GM10248 (cell line): ENCODE measurements at regions of chr2 and their contacts with region 1.

Region 1: DNA sequence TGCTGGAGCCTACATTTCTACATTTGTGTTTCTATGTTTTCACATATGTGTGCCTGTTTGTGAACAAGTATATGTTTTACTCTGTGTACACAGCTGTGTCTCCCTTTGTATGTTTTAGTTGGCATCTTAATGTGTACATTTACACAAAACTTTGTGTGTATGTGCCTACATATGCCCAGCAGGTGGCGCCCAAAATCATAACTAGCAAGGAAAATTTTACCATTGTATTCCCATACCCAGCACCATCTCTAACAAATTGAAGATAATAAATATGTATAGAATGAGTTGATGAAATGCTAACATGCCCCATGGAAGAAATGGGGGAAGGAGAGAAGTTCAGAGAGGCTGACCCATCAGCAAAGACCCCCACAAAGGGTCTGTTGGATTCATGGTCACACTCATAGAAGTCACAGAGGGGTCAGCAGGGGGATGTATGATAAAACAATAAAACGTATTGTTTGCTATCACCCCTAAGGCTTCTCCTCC is 48.1 kb downstream of the PKDCC start:
- DNase-seq: peak; percentile 37
- CTCF ChIP-seq: peak; percentile 78

Region 2: DNA sequence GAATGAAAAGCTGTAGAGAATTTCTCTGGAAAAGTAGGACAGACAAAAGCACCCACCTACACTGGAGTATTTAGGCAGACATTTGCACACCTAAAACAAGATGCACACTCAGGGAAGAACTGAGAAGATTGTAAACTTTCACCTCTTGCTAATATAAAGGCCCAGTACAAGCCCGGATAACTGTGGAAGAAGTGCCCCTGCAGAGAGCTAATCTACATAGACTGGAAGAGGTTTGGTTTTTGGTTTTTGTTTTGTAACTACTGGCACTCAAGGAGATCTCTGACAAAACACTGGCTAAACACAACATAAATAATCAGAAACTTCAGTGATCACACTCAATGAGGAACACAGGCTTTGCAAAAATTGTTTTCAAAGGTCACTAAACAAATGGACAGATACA is 861.9 kb before region 1 on chr2:
- CTCF ChIA-PET with region 1: no interaction called
- POLR2A ChIA-PET with region 1: no interaction called
- DNase-seq: no peak
- CTCF ChIP-seq: no peak

Region 3: GRCh38 chr2:41853427-41854216 is 242.3 kb before region 1 on chr2:
- CTCF ChIA-PET with region 1: interaction called, 420 read pairs
- POLR2A ChIA-PET with region 1: no interaction called
- DNase-seq: no peak
- CTCF ChIP-seq: peak; percentile 59

Region 4: DNA sequence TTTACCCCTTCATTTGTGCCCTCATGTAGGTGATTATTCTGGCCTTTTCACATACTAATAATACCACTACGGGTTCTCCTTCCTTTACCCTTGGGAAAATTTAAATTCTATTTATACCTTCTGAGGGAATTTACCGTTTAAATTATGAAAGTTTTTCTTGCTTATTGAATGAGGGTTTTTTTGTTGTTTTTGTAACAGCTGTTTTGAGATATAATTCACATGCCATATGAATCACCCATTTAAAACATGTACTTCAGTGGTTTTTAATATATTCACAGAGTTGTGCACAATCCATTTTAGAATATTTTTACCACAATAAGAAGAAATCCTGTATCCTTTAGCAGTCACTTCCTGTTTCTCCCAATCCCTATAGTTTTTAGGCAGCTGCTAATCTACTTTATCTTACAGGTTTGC is 127.9 kb after region 1 on chr2:
- CTCF ChIA-PET with region 1: interaction called, 11 read pairs
- POLR2A ChIA-PET with region 1: no interaction called
- DNase-seq: no peak
- CTCF ChIP-seq: no peak

Region 5: DNA sequence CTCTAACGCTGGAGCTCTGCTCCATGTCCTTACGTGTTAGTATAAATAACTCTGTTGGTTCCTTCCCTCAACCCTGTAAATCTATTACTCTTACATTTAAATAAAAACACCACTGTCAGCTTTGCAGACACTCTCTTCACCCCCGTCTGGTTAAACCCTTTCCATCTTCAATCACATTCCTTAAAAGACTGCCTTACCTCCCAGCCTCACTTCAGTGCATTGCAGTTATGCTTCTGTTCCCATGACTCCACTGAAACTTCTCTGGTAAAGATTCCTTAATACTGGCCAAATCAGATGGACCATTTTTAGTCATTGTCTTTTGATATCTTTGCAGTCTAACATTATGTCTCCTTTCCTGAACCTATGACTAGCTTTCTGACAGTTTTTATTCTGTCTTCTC is 134.9 kb after region 1 on chr2:
- CTCF ChIA-PET with region 1: interaction called, 106 read pairs
- POLR2A ChIA-PET with region 1: no interaction called
- DNase-seq: no peak
- CTCF ChIP-seq: no peak

Region 6: DNA sequence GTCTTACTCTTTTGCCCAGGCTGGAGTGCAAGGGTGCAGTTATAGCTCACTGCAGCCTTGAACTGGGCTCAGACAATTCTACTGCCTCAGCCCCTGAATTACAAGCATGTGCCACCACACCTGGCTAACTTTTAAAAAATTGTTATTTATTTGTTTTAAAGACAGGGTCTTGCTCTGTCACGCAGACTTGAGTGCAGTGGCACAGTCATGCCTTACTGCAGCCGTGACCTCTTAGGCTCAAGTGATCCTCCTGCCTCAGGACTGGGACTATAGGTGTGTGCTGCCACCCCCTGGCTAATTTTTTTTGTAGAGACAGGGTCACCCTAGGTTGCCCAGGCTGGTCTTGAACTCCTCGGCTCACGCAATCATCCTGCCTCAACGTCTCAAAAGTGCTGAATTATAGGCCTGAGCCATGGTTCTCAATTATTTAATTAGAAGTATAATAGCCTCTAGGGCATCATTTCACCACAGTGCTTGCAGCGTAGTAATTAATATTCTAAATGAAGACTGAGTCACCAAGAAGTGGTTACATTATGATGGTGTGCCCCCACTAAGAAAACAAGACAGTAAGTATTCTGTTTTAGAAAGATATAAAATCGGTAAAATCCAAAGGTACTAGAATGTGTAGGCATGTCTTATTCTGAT is 142.8 kb after region 1 on chr2:
- CTCF ChIA-PET with region 1: interaction called, 106 read pairs
- POLR2A ChIA-PET with region 1: no interaction called
- DNase-seq: no peak
- CTCF ChIP-seq: peak; percentile 33

Region 7: GRCh38 chr2:42246562-42246961 is 150.6 kb after region 1 on chr2:
- CTCF ChIA-PET with region 1: interaction called, 106 read pairs
- POLR2A ChIA-PET with region 1: no interaction called
- DNase-seq: no peak
- CTCF ChIP-seq: no peak

Region 8: DNA sequence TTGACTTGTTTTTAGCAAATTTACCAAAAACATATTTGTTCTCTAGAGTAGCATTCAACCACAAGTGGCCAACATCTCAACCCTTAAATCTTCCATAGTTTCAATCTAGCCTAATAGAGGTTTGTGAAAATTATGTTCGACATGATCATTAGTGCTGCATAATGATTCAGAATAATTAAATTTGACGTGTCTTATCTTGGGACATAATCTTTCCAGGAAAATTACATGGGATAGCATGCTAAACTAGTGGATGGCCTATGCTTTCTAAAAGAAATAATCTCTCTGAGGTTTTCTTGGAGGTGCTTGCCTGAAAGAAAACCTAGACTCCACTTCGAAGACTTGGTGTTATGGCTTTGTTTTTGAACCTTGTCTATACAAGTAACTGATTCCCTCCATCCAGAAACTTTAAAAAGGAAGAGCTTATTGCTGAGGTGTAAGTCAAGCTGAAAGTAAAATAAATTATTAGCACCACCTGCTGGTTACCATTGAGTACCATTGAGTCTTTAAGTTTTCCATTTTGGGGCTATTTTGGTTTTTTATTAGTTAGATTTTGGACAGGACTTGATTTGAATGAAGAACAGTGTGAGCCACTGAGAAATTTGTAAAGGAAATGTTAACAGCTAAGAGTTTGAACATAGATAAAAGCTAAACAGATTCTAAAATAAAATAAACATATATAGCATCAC is 232.3 kb after region 1 on chr2:
- CTCF ChIA-PET with region 1: interaction called, 102 read pairs
- POLR2A ChIA-PET with region 1: no interaction called
- DNase-seq: no peak
- CTCF ChIP-seq: peak; percentile 44